ENCODE measurements at regions of chrX and their contacts with region 1.

Region 1: GRCh38 chrX:24498975-24499374 is 33.9 kb downstream of the PDK3 start:
- DNase-seq: no peak
- H3K4me3 ChIP-seq: no peak overlapping the region
- H3K27ac ChIP-seq: no peak overlapping the region
- H3K4me1 ChIP-seq: no peaks in the 10 kb centered on the region
- H3K27me3 ChIP-seq: no peaks in the 10 kb centered on the region
- CTCF ChIP-seq: peak; percentile 48

Region 2: DNA sequence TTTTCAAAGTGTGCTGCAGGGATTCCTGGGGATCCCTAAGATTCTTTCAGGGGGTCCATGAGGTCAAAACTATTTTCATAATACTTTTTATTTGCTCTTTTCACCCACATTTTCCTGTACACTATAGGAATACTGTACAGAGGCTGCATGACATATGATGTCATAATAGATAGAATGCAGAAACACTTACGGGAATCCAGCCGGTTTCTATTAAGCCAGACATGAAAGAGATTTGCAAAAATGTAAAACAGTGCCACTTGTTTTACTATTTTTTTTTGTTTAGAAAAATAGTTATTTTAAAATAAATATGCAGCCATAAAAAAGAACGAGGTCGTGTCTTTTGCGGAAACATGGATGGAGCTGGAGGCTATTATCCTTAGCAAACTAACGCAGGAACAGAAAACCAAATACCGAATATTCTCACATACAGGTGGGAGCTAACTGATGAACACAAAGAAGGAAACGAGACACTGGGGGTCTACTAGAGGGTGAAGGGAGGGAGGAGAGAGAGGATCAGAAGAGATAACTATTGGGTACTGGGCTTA is 344.4 kb before region 1 on chrX:
- intact Hi-C with region 1: no loop called
- DNase-seq: no peak
- H3K4me3 ChIP-seq: no peak overlapping the region
- H3K27ac ChIP-seq: no peak overlapping the region
- H3K4me1 ChIP-seq: no peaks in the 10 kb centered on the region
- H3K27me3 ChIP-seq: no peaks in the 10 kb centered on the region
- CTCF ChIP-seq: no peak

Region 3: GRCh38 chrX:24259544-24260240 is 239.3 kb before region 1 on chrX:
- intact Hi-C with region 1: loop called (anchors 5 kb)
- DNase-seq: peak; percentile 38
- H3K4me3 ChIP-seq: no peak overlapping the region
- H3K27ac ChIP-seq: no peak overlapping the region
- H3K4me1 ChIP-seq: no peaks in the 10 kb centered on the region
- H3K27me3 ChIP-seq: no peaks in the 10 kb centered on the region
- CTCF ChIP-seq: peak; percentile 38

Region 4: DNA sequence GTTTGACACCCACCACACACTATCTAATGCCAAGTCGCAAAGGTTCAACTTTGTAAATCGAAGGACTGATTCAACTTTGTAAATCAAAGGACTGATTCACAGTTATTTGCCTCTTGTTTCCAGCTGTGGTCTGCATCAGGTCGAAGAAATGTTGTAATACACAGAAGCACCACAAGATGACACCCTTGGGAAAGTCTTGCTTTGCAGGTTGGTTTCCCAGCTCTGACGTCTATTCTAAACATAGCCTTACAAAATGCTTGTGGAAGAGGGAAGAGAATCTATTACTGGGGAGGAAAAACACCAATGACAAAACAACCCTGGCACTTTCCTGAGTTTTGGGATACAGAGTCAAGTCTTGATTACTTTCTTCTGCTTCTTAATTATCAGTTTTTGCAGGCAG is 103.2 kb before region 1 on chrX:
- intact Hi-C with region 1: loop called (anchors 2 kb)
- DNase-seq: peak; percentile 53
- H3K4me3 ChIP-seq: no peak overlapping the region
- H3K27ac ChIP-seq: no peak overlapping the region
- H3K4me1 ChIP-seq: no peaks in the 10 kb centered on the region
- H3K27me3 ChIP-seq: peaks cover 9% of the 10 kb centered on the region
- CTCF ChIP-seq: peak; percentile 71